Activated B cell treated with CpG ODN at 0.5 μM for 24 hours (primary cell): ENCODE measurements at regions of chr7 and their contacts with region 1.

Region 1: DNA sequence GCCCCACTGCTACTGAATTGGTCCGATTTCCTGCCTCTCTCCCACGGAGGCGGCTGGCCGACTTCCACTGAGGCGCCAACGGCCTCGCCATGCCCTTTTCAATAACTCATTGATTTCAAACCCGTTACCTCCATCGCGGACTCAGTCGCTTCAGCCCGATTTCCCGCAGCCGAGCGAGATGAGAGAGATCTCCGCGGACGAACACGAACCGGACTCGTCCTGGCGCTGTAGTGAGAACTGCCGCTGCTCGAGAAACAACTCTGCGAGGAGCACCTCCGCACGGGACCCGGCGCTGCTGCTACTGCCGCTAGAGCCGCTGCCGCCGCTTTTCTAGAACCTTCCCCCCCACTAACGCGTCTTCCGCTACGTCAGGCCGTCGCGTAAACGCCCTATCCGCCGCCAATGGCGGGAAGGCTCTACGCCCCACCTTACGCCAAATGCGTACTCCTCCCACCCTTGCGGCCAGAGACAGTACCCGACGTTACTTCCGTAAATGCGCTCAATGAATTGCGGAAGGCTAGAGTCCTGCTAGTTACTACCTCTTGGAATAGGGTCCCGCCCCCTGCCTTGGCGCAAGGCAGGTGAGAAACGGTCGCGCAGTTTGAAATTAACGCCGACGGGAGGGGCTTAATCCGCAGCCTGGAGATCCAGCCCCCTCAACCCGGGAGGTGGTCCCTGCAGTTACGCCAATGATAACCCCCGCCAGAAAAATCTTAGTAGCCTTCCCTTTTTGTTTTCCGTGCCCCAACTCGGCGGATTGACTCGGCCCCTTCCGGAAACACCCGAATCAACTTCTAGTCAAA is at the start of gene HNRNPA2B1:
- DNase-seq: peak; percentile 95
- ATAC-seq: peak; percentile 66
- H3K4me3 Mint-ChIP-seq: peak within 1 kb of the TSS; percentile 99
- H3K27ac Mint-ChIP-seq: peak within 1 kb of the TSS; percentile 100
- H3K4me1 Mint-ChIP-seq: peaks cover 55% of the 10 kb centered on the region
- H3K27me3 Mint-ChIP-seq: no peaks in the 10 kb centered on the region
- CTCF ChIP-seq: no peak
- total RNA-seq, gene HNRNPA2B1: 618 and 634 TPM in 2 replicates

Region 2: GRCh38 chr7:25894902-25895791 is 305.5 kb before region 1 on chr7:
- CTCF ChIA-PET with region 1: interaction called, 23 read pairs
- POLR2A ChIA-PET with region 1: interaction called, 58 read pairs
- intact Hi-C with region 1: loop called (anchors 2 kb)
- DNase-seq: peak; percentile 77
- ATAC-seq: peak; percentile 88
- H3K4me3 Mint-ChIP-seq: peak overlapping the region; percentile 75
- H3K27ac Mint-ChIP-seq: peak overlapping the region; percentile 62
- H3K4me1 Mint-ChIP-seq: peaks cover 32% of the 10 kb centered on the region
- H3K27me3 Mint-ChIP-seq: peaks cover 38% of the 10 kb centered on the region
- CTCF ChIP-seq: peak; percentile 36

Region 3: DNA sequence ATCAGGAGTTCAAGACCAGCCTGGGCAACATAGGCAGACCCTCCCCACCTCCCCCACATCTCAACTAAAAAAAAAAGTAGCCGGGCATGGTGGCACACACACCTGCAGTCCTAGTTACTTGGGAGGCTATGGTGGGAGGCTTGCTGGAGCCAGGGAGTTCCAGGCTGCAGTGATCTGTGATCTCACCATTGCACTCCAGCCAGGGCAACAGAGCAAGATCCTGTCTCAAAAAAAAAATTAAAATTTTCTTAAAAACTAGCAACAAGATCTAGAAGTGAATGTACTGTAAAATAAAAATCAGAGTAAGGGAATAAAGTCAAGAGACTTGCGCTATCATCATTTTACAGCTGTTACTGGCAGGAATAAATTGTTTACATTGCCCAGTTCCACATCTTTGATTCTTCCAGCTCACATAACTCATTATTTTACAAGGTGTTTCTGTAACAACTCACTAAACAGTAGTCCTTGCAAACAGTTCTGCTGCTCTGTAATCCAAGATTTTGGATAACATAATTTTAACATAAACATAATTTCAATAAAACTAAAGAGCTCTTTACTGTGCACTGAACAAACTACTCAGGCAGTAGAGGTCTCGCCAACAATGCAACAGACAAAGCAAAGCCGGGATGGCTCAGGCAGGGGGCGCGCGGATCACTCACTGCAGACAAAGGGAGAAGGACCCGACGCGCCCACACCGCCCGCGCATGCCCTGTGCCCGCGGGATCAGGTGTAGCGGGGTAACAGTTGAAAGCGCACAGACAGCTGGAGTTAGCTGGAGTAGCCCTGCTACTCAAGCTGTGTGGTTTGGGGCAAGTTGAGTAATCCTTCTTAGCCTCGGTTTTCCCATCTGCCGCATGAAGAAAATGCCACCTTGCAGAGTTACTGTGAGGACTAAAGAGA is 122.0 kb before region 1 on chr7:
- CTCF ChIA-PET with region 1: interaction called, 29 read pairs
- POLR2A ChIA-PET with region 1: interaction called, 23 read pairs
- intact Hi-C with region 1: loop called (anchors 1 kb)
- DNase-seq: peak; percentile 73
- ATAC-seq: peak; percentile 100
- H3K4me3 Mint-ChIP-seq: no peak overlapping the region
- H3K27ac Mint-ChIP-seq: no peak overlapping the region
- H3K4me1 Mint-ChIP-seq: peaks cover 7% of the 10 kb centered on the region
- H3K27me3 Mint-ChIP-seq: peaks cover 33% of the 10 kb centered on the region
- CTCF ChIP-seq: no peak

Region 4: GRCh38 chr7:26151953-26152781 is 48.5 kb before region 1 on chr7 and contains the start of gene NFE2L3:
- CTCF ChIA-PET with region 1: interaction called, 15 read pairs
- POLR2A ChIA-PET with region 1: interaction called, 72 read pairs
- intact Hi-C with region 1: loop called (anchors 1 kb)
- DNase-seq: peak; percentile 82
- ATAC-seq: peak; percentile 90
- H3K4me3 Mint-ChIP-seq: peak within 1 kb of the TSS; percentile 94
- H3K27ac Mint-ChIP-seq: peak within 1 kb of the TSS; percentile 86
- H3K4me1 Mint-ChIP-seq: peaks cover 48% of the 10 kb centered on the region
- H3K27me3 Mint-ChIP-seq: no peaks in the 10 kb centered on the region
- CTCF ChIP-seq: no peak
- total RNA-seq, gene NFE2L3: 2.7 and 3.0 TPM in 2 replicates

Region 5: GRCh38 chr7:26291699-26292538 is 91.3 kb after region 1 on chr7 and contains the start of gene SNX10:
- CTCF ChIA-PET with region 1: interaction called, 3 read pairs
- POLR2A ChIA-PET with region 1: interaction called, 91 read pairs
- intact Hi-C with region 1: loop called (anchors 1 kb)
- DNase-seq: peak; percentile 76
- ATAC-seq: peak; percentile 77
- H3K4me3 Mint-ChIP-seq: peak within 1 kb of the TSS; percentile 92
- H3K27ac Mint-ChIP-seq: peak within 1 kb of the TSS; percentile 95
- H3K4me1 Mint-ChIP-seq: peaks cover 51% of the 10 kb centered on the region
- H3K27me3 Mint-ChIP-seq: no peaks in the 10 kb centered on the region
- CTCF ChIP-seq: no peak
- total RNA-seq, gene SNX10: 28.9 and 32.3 TPM in 2 replicates

Region 6: GRCh38 chr7:26365077-26365900 is 164.6 kb after region 1 on chr7:
- CTCF ChIA-PET with region 1: interaction called, 35 read pairs
- POLR2A ChIA-PET with region 1: interaction called, 25 read pairs
- intact Hi-C with region 1: loop called (anchors 1 kb)
- DNase-seq: no peak
- ATAC-seq: peak; percentile 89
- H3K4me3 Mint-ChIP-seq: no peak overlapping the region
- H3K27ac Mint-ChIP-seq: peak overlapping the region; percentile 85
- H3K4me1 Mint-ChIP-seq: peaks cover 46% of the 10 kb centered on the region
- H3K27me3 Mint-ChIP-seq: no peaks in the 10 kb centered on the region
- CTCF ChIP-seq: peak; percentile 52

Region 7: DNA sequence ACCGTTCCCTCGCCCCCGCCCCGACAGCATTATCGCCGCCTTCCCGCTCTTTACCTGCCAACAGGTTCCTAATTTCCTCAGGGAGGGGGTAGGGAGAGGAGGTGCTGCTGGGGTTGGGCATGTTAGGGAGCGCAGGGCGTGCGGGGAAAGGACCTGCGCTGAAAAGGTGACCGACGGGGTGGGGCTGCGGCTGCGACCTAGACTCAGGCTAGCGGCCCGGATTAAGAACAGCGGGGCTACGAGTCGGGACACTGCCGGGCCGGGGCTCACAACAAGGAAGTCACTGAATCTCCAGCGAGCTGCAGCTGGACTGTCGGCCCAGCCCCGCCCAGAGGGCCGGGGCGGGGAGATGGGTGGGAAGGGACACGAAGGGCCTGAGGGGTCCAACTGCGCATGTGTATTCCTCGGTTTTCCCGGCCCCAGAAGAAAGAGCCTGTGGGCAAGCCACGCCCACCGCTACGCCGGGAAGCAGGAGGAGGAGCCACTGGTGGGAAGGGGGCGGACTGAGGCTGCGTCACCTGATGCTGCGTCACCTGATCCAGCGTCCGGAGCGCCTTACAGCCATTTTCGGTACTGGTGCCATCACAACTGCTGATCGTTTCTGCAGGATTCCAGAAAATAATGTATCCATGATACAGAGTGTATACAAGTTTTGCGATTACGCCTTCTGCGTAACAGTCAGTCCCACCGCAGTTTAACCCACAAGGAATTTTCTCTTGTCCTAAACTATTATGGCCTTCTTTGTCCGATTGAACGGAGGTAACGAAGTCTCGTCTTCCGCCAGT is 663.9 kb after region 1 on chr7 and contains the start of gene SKAP2:
- CTCF ChIA-PET with region 1: no interaction called
- POLR2A ChIA-PET with region 1: interaction called, 3 read pairs
- intact Hi-C with region 1: loop called (anchors 1 kb)
- DNase-seq: peak; percentile 92
- ATAC-seq: peak; percentile 84
- H3K4me3 Mint-ChIP-seq: peak within 1 kb of the TSS; percentile 99
- H3K27ac Mint-ChIP-seq: peak within 1 kb of the TSS; percentile 99
- H3K4me1 Mint-ChIP-seq: peaks cover 32% of the 10 kb centered on the region
- H3K27me3 Mint-ChIP-seq: no peaks in the 10 kb centered on the region
- CTCF ChIP-seq: no peak
- total RNA-seq, gene SKAP2: 70.3 and 75.6 TPM in 2 replicates